ENCODE measurements at regions of chrX and their contacts with region 1.

Region 1: GRCh38 chrX:38260231-38260630 is 39.6 kb upstream of the SRPX start:
- DNase-seq: no peak
- ATAC-seq: no peak
- H3K4me3 Mint-ChIP-seq: no peak overlapping the region
- H3K27ac Mint-ChIP-seq: no peak overlapping the region
- H3K4me1 Mint-ChIP-seq: no peaks in the 10 kb centered on the region
- H3K27me3 Mint-ChIP-seq: no peaks in the 10 kb centered on the region

Region 2: GRCh38 chrX:38327007-38327774 is 67.0 kb after region 1 on chrX and contains the start of gene RPGR:
- CTCF ChIA-PET with region 1: interaction called, 12 read pairs
- DNase-seq: peak; percentile 95
- ATAC-seq: peak; percentile 96
- H3K4me3 Mint-ChIP-seq: peak within 1 kb of the TSS; percentile 83
- H3K27ac Mint-ChIP-seq: peak within 1 kb of the TSS; percentile 93
- H3K4me1 Mint-ChIP-seq: peaks cover 27% of the 10 kb centered on the region
- H3K27me3 Mint-ChIP-seq: no peaks in the 10 kb centered on the region
- total RNA-seq, gene RPGR: 4.2 to 6.1 TPM